Aorta (tissue), 5 donors: ENCODE measurements at regions of chr9 and their contacts with region 1.

Region 1: DNA sequence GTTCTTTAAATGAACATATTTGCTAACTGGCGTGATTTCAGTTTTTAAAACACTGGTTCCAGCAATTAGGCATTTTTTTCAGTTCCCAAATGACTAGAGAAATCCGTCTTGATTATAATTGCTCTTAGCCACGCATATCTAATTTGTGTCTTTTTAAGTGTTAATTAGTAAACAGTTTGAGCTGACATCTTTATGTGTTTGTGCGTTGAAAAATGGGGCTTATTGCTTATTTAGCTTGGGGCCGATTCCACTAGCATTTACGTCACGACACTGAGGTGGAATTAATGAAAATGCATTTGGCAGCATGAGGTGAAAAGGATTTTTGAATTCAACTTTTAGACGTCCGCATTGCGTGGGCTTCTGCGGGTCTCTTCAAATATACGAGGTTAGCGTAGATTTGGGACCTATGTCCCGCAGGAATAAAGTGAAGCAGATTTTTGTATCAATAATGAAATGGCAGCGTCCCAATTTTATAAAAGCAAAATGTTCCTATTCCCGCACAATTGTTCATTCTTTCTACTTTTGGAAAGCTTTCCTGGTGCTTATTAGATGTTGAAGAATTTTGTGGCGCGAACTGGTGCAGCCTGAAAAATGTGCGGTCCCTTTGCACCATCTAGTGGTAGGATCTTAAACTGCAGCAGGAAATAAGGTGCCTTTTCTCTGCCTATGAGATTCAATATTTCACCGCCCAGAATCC is 122.7 kb upstream of the LMX1B start:
- DNase-seq: peak; percentile 15 to 35
- ATAC-seq: peak; percentile 79
- H3K4me3 ChIP-seq: no peak overlapping the region
- H3K27ac ChIP-seq: no peak overlapping the region
- H3K4me1 ChIP-seq: no peaks in the 10 kb centered on the region
- H3K27me3 ChIP-seq: no peaks in the 10 kb centered on the region

Region 2: DNA sequence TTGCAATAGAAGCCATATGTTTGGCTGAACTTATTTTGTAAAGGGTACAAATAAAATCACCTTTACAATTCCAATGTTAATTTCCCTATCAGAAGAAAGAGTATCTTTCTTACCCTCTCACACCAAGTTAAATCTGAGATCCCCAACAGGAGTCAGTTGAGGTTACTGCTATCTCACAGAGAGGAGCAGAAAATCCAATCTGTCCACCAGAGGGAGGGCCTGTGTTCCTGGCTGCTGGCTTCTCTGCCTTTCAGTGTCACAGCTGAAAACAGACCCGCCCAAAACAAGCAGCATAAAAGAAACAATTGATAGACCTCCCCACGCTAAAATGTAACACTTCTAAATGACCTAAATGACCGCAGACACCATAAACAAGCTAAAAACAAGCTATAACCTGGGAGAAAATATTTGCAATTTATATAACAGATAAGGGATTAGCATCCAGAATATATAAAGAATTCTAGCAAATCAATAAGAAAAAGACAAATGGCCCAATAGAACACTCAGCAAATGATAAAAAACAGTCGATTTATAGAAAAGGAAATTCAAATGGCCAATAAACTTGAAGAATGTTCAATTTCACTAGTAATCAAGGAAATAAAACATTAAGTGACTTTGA is 188.9 kb before region 1 on chr9:
- intact Hi-C with region 1: loop called (anchors 5 kb)
- DNase-seq: no peak
- ATAC-seq: peak; percentile 73
- H3K4me3 ChIP-seq: no peak overlapping the region
- H3K27ac ChIP-seq: no peak overlapping the region
- H3K4me1 ChIP-seq: no peaks in the 10 kb centered on the region
- H3K27me3 ChIP-seq: no peaks in the 10 kb centered on the region

Region 3: DNA sequence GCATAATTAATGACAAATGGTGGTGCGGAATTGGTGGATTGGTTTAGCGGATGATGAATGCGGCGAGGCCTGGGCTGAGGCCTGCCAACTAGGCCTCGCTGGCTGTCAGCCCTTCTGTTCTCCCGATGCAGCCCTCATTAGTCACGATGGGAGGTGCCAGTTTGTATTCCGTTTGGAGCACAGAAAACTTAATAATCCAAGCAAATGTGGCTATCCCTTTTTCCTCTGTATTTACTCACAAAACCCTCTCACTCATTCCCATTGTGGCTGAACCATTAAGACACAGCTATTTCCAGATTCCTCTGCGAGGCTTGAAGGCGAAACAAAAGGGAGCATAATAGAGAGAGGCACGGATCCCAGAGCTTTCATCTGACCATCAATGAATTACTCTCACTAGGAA is 50.1 kb before region 1 on chr9:
- intact Hi-C with region 1: no loop called
- DNase-seq: no peak
- ATAC-seq: no peak
- H3K4me3 ChIP-seq: no peak overlapping the region
- H3K27ac ChIP-seq: no peak overlapping the region
- H3K4me1 ChIP-seq: no peaks in the 10 kb centered on the region
- H3K27me3 ChIP-seq: no peaks in the 10 kb centered on the region

Region 4: DNA sequence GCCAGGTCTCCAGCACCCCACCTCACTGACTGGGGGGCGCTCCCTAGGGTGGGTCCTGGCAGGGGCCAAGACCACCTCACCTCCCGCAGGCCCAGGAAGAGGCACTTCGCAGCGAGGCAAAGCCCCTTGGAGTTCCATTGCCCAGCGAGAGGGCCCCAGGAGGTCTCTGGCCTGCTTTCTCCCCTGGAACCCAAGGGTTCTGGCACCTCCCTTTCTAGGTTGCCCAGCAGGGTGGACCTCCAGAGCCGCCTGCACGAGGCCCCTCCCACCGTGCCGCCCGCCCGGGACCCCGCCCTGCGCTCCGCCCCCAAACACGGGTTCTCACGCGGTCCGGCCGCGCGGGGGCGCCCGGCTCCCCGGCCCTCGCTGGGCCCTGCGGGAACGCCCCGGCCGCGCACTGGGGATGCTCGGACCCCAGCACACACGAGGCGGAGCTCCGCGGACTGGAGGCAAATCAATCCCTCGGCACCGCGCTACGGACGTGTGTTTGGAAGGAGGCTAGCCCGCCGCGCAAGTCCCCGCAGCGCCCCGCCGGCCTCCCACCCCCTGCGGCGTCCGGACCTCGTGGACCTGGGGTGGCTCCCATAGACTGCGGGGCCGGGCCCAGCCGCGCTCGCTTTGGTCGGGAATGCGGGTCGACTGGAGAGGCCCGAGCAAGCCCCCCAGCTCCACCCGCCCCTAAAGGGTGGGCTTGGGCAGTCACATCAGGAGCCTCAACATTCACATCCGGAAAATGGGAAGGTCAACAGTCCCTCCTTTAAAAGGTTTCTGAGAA is 23.2 kb after region 1 on chr9:
- intact Hi-C with region 1: no loop called
- DNase-seq: peak; percentile 75 to 91
- ATAC-seq: peak; percentile 88
- H3K4me3 ChIP-seq: no peak overlapping the region
- H3K27ac ChIP-seq: no peak overlapping the region
- H3K4me1 ChIP-seq: no peaks in the 10 kb centered on the region
- H3K27me3 ChIP-seq: no peaks in the 10 kb centered on the region

Region 5: GRCh38 chr9:126564711-126565110 is 73.7 kb after region 1 on chr9:
- intact Hi-C with region 1: no loop called
- DNase-seq: peak in 1 of 2 donors; percentile 20
- ATAC-seq: no peak
- H3K4me3 ChIP-seq: no peak overlapping the region
- H3K27ac ChIP-seq: no peak overlapping the region
- H3K4me1 ChIP-seq: no peaks in the 10 kb centered on the region
- H3K27me3 ChIP-seq: peaks cover 0 to 2% of the 10 kb centered on the region in 2 donors

Region 6: GRCh38 chr9:126650404-126651341 is 159.7 kb after region 1 on chr9:
- intact Hi-C with region 1: no loop called
- DNase-seq: no peak
- ATAC-seq: no peak
- H3K4me3 ChIP-seq: no peak overlapping the region
- H3K27ac ChIP-seq: no peak overlapping the region
- H3K4me1 ChIP-seq: no peaks in the 10 kb centered on the region
- H3K27me3 ChIP-seq: no peaks in the 10 kb centered on the region